Endothelial cell of umbilical vein (primary cell): ENCODE measurements at regions of chrX and their contacts with region 1.

Region 1: DNA sequence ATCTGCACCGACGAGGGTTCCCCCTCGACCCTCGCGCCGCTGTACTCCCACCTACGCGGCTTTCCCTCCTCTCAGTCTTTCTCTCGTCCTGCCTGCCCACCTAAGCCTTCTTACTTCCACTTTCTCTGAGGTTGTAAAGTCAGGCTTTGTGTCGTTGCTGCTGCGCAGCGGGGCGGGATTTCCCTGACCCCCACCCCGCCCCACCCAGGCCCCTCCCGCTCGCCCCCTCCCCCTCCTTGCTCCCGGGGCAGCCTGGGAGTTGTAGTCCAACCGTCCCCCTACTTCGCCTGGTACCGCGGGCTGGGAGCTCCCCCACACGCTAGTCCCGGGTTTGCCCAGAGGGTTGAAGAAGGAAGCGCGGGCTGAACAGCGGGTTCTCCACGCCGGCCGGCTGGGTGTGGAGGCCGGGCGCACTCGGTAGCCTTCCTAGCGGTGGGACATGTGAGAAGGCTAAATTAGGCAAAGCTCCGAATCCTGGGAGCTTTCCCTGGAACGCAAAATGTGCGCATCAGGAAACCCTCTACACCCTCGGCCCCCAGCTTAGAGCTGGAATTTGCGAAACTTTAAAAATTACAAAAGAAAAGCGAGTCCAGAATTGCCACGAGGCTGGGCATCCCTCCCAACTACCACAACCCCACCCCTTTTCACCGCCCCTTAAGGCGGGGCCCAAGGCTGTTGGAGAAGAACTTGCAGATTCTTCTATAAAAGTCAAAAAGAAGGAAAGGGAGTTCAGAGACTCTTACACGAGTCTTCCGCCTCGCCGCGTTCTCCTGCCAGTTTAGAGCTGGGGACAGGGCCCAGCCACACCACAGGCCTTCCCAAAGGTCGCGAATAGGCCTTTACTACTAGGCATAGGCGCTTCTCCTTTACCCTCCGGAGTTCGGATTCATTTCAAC is at the start of gene ATP11C:
- DNase-seq: peak; percentile 82
- H3K4me3 ChIP-seq: peak within 1 kb of the TSS; percentile 83 to 88 (median 85)
- H3K27ac ChIP-seq: peak within 1 kb of the TSS; percentile 73
- H3K4me1 ChIP-seq: peaks cover 8% of the 10 kb centered on the region
- H3K27me3 ChIP-seq: no peaks in the 10 kb centered on the region
- CTCF ChIP-seq: peak in 1 of 2 donors; percentile 11
- POLR2A ChIP-seq: peak; percentile 84
- total RNA-seq, gene ATP11C: 29.5 and 31.8 TPM in 2 replicates

Region 2: GRCh38 chrX:139739138-139739537 is 194.0 kb before region 1 on chrX:
- CTCF ChIA-PET with region 1: no interaction called
- POLR2A ChIA-PET with region 1: no interaction called
- dilution Hi-C with region 1: no loop called
- intact Hi-C with region 1: loop called (anchors 10 kb)
- DNase-seq: peak; percentile 44
- H3K4me3 ChIP-seq: no peak overlapping the region
- H3K27ac ChIP-seq: peak overlapping the region; percentile 63
- H3K4me1 ChIP-seq: peaks cover 20% of the 10 kb centered on the region
- H3K27me3 ChIP-seq: no peaks in the 10 kb centered on the region
- CTCF ChIP-seq: no peak
- POLR2A ChIP-seq: no peak

Region 3: GRCh38 chrX:139759637-139760036 is 173.5 kb before region 1 on chrX:
- CTCF ChIA-PET with region 1: interaction called, 5 read pairs
- POLR2A ChIA-PET with region 1: no interaction called
- dilution Hi-C with region 1: no loop called
- intact Hi-C with region 1: loop called (anchors 5 kb)
- DNase-seq: peak; percentile 18
- H3K4me3 ChIP-seq: no peak overlapping the region
- H3K27ac ChIP-seq: no peak overlapping the region
- H3K4me1 ChIP-seq: peaks cover 3% of the 10 kb centered on the region
- H3K27me3 ChIP-seq: no peaks in the 10 kb centered on the region
- CTCF ChIP-seq: peak; percentile 26 to 38
- POLR2A ChIP-seq: no peak

Region 4: GRCh38 chrX:139826065-139827044 is 106.8 kb before region 1 on chrX:
- CTCF ChIA-PET with region 1: interaction called, 3 read pairs
- POLR2A ChIA-PET with region 1: no interaction called
- dilution Hi-C with region 1: no loop called
- intact Hi-C with region 1: loop called (anchors 2 kb)
- DNase-seq: peak; percentile 66
- H3K4me3 ChIP-seq: no peak overlapping the region
- H3K27ac ChIP-seq: peak overlapping the region; percentile 26
- H3K4me1 ChIP-seq: peaks cover 25% of the 10 kb centered on the region
- H3K27me3 ChIP-seq: no peaks in the 10 kb centered on the region
- CTCF ChIP-seq: no peak
- POLR2A ChIP-seq: no peak

Region 5: GRCh38 chrX:140123446-140123845 is 190.3 kb after region 1 on chrX:
- CTCF ChIA-PET with region 1: no interaction called
- POLR2A ChIA-PET with region 1: no interaction called
- dilution Hi-C with region 1: no loop called
- intact Hi-C with region 1: no loop called
- DNase-seq: no peak
- H3K4me3 ChIP-seq: no peak overlapping the region
- H3K27ac ChIP-seq: no peak overlapping the region
- H3K4me1 ChIP-seq: no peaks in the 10 kb centered on the region
- H3K27me3 ChIP-seq: no peaks in the 10 kb centered on the region
- CTCF ChIP-seq: no peak
- POLR2A ChIP-seq: no peak